G401 (cell line): ENCODE measurements at regions of chr1 and their contacts with region 1.

Region 1: GRCh38 chr1:190897233-190897632 is 419.6 kb upstream of the BRINP3 start:
- DNase-seq: no peak

Region 2: DNA sequence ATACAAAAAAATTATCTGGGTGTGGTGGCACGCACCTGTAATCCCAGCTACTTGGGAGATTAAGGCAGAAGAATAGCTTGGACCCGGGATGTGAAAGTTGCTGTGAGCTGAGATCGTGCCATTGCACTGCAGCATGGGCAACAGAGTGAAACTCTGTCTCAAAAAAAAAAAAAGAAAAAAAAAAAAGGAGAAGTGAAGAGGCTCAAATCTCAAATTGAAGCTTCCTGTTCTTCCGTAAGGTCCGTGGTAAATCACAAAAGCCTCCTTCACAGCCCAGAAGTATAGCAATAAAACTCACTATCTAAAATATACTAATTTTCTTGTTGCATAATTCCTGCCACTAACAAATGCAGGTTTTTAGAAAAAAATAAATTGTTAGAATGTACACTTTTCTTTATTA is 78.6 kb after region 1 on chr1:
- in situ Hi-C with region 1: no loop called
- DNase-seq: no peak

Region 3: DNA sequence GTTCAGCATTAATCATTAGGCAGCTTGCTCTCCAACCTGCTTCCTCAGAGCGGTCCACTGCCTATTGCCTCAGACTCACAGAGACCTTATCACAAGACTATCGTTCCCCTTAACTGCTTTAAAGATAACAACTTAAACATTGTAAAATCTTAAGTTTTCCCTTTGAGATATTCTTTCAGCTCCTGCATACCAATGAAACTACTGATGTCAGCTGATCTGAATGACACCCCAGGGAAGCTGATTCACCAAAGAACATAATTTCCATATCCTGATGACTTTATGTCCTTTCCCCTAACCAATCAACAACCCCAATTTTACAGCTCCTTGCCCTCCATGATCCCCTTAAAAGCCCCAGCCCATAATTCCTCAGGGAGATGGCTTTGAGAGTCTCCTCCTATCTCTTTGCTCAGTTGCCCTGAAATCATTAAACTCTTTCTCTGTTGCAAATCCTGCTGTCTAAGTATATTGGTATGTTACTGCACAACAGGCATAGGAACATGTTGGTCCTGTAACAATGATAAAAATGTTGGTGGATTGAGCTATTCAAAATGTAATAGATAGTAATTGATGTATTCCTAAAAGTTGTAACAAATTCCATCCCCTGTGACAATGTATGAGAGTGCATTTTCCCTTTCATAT is 639.7 kb after region 1 on chr1:
- in situ Hi-C with region 1: loop called (anchors 10 kb)
- DNase-seq: no peak